ENCODE measurements at regions of chr5 and their contacts with region 1.

Region 1: DNA sequence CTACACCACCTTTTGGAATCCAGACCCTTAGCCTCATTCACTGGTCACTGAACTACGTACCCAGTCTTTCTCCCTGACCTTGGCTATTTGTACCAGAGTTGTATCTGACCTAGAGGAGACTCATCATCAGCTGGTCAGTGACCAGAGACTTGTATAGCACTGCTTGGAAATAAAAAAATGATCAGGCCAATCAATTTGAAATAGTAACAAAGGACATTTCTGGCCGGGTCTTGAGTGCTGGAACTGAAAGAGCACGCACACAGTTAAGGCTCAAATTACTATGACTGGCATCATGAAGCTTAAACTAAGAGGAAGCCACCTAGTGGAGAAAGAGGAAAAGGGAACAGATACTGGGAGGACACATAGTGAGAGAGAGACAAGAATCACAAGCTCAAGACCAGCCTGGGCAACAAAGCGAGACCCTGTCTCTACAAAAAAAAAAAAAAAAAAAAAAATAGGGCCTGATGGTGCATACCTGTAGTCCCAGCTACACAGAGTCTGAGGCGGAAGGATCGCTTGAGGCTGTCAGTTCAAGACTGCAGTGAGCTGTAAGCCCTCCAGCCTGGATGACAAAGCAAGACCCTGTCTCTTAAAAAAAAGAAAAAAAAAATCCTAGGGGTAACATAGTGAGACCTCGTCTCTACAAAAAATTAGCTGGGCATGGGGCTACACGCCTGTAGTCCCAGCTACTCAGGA is 12.8 kb upstream of the SRP19 start:
- DNase-seq: peak in 1 of 2 experiments; percentile 40
- H3K4me3 ChIP-seq: no peak overlapping the region
- H3K27ac ChIP-seq: no peak overlapping the region
- H3K4me1 ChIP-seq: no peaks in the 10 kb centered on the region
- H3K27me3 ChIP-seq: no peaks in the 10 kb centered on the region
- CTCF ChIP-seq: peak; percentile 70

Region 2: DNA sequence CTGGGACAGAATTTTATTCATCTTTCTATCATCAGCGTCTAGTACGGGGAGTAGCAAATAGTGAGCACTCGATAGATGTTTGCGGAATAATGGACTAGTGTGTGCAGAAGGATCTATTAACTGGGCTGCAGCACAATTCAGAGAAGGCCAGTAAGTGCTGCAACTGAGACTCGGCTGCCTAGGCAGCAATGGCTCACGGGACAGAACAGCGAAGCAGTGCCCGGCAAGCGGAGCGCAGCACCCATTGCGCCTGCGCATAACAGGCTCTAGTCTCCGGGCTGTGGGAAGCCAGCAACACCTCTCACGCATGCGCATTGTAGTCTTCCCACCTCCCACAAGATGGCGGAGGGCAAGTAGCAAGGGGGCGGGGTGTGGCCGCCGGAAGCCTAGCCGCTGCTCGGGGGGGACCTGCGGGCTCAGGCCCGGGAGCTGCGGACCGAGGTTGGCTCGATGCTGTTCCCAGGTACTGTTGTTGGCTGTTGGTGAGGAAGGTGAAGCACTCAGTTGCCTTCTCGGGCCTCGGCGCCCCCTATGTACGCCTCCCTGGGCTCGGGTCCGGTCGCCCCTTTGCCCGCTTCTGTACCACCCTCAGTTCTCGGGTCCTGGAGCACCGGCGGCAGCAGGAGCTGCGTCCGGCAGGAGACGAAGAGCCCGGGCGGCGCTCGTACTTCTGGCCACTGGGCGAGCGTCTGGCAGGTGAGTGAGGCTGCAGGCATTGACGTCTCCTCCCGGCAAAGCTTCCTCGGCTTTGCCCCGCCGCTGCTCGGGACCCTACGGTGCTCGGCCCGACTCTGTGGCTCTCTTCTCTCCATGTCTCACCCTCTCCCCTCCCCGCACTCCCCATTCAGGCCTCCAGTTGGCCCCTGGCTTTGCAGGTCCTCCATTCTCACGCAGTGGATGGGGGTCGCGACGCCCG is 140.8 kb before region 1 on chr5:
- CTCF ChIA-PET with region 1: interaction called, 12 read pairs
- POLR2A ChIA-PET with region 1: no interaction called
- intact Hi-C with region 1: no loop called
- DNase-seq: peak; percentile 91 to 95
- H3K4me3 ChIP-seq: peak overlapping the region; percentile 71
- H3K27ac ChIP-seq: peak overlapping the region; percentile 52
- H3K4me1 ChIP-seq: peaks cover 16% of the 10 kb centered on the region
- H3K27me3 ChIP-seq: no peaks in the 10 kb centered on the region
- CTCF ChIP-seq: no peak

Region 3: GRCh38 chr5:112860929-112861637 is 12.8 kb after region 1 on chr5 and contains the start of gene SRP19:
- CTCF ChIA-PET with region 1: interaction called, 8 read pairs
- POLR2A ChIA-PET with region 1: interaction called, 11 read pairs
- intact Hi-C with region 1: no loop called
- DNase-seq: peak; percentile 88 to 93
- H3K4me3 ChIP-seq: peak within 1 kb of the TSS; percentile 84
- H3K27ac ChIP-seq: peak within 1 kb of the TSS; percentile 69
- H3K4me1 ChIP-seq: peaks cover 20% of the 10 kb centered on the region
- H3K27me3 ChIP-seq: no peaks in the 10 kb centered on the region
- CTCF ChIP-seq: no peak
- total RNA-seq, gene SRP19: 26.8 and 34.4 TPM in 2 replicates

Region 4: DNA sequence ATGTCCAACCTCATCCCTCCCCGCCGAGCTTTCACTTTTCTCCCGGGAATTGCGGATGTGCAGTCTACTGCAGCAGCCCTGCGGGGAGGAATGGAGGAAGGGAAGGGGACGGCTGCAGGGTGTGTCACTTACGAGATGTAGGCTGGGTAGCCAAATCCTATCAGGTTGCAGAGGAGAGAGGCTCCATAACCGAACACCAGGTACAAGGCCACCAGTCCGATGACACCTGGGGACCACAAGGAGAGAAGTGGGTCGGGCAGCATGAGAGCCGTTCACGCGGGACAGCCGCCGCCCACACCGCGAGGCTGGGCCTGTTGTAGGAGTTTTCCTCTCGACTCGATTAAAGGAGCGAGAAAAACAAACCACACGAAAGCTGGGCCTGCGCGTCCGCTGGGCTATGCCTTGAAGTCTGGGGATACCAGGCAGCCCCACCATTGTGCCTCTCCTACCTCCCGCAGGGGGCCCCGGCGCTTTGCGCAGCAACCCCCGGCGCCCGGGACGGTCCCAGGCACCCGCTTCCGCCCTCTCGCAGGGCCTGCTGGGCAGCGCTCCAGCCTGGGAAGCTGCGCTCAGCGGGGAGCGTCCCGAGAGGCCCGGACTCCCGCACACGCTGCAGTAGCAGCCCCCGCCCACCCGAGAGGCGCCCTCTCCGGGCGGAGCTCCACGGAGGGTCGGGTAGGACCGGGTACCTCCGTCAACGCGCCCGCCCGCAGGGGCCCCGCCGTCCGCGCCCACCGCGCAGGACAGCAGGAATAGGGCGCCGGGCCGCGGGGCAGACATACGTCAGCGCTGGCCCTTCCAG is 73.0 kb after region 1 on chr5:
- CTCF ChIA-PET with region 1: no interaction called
- POLR2A ChIA-PET with region 1: no interaction called
- intact Hi-C with region 1: no loop called
- DNase-seq: peak; percentile 53 to 68
- H3K4me3 ChIP-seq: peak overlapping the region; percentile 97
- H3K27ac ChIP-seq: peak overlapping the region; percentile 53
- H3K4me1 ChIP-seq: peaks cover 7% of the 10 kb centered on the region; the same call in 1 of the 2 replicates
- H3K27me3 ChIP-seq: no peaks in the 10 kb centered on the region
- CTCF ChIP-seq: no peak

Measured in PC-9 (cell line).